SK-MEL-5 (cell line): ENCODE measurements at regions of chr2 and their contacts with region 1.

Region 1: GRCh38 chr2:43105586-43106558 is 120.5 kb downstream of the ZFP36L2 start:
- DNase-seq: peak; percentile 65

Region 2: DNA sequence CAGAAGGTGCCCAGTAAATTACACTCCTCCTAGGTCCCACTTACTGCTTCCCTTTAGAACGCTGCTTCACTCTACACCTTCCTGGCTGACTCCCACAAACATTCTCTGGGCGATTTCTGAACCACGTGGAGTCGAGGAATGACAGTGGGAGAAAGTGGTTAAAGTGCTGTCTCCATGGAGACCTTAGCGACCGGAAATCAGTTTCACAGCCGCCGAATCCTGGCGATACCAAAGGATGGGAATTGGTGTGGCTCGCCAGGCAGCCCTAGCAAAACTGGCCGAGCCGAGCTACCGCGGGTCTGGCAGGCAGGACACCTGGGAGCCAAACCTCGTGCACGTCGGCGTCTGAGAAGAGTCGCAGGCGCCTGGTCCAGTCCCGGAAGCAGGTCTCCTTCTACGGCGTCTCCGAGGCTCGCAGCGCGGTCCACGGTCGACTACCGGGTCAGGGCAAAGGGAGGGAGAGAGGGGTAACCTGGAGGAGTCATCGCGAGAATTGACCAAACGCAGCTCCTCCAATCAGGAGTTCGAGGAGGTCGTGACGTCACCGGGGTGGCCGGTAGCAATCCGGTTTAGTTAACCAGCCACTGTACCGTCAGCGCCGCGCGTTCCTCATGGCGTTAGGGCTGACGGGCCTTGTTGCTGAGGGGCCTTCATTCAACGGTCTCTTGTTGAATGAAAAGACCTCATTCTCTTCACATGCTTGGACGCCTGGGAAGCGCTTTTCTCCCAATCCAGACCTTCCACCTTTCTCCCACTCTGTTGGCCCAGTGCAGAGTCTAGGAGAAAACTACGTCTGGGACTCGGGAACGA is 489.9 kb after region 1 on chr2 and contains the start of gene THADA:
- in situ Hi-C with region 1: loop called (anchors 25 kb)
- DNase-seq: peak; percentile 100
- total RNA-seq, gene THADA: 50.3 and 57.3 TPM in 2 replicates